ENCODE measurements at regions of chr2 and their contacts with region 1.

Region 1: GRCh38 chr2:39696838-39697237 is 31.1 kb downstream of the TMEM178A start:
- DNase-seq: peak; percentile 11 to 17
- ATAC-seq: peak; percentile 69 to 83
- H3K4me3 ChIP-seq: no peak overlapping the region
- H3K27ac ChIP-seq: no peak overlapping the region
- H3K4me1 ChIP-seq: no peaks in the 10 kb centered on the region
- CTCF ChIP-seq: peak; percentile 63
- EP300 ChIP-seq: no peak
- POLR2A ChIP-seq: no peak
- RAD21 ChIP-seq: peak; percentile 63 to 78

Region 2: GRCh38 chr2:38665854-38666555 is 1030.8 kb before region 1 on chr2 and contains the start of gene GALM:
- CTCF ChIA-PET with region 1: no interaction called
- POLR2A ChIA-PET with region 1: no interaction called
- DNase-seq: peak; percentile 86 to 91
- ATAC-seq: peak; percentile 91 to 96
- H3K4me3 ChIP-seq: peak within 1 kb of the TSS; percentile 54
- H3K27ac ChIP-seq: peak within 1 kb of the TSS; percentile 71 to 89
- H3K4me1 ChIP-seq: peaks cover 13% of the 10 kb centered on the region
- CTCF ChIP-seq: no peak
- EP300 ChIP-seq: no peak
- POLR2A ChIP-seq: peak; percentile 61
- RAD21 ChIP-seq: no peak; a peak in 1 of 5 replicates
- polyA plus RNA-seq, gene GALM: 34.1 and 34.2 TPM in 2 replicates

Region 3: GRCh38 chr2:39379643-39380524 is 317.0 kb before region 1 on chr2:
- CTCF ChIA-PET with region 1: interaction called, 28 read pairs
- POLR2A ChIA-PET with region 1: no interaction called
- DNase-seq: peak; percentile 26 to 71
- ATAC-seq: peak; percentile 88 to 91; a peak in 5 of 6 replicates
- H3K4me3 ChIP-seq: no peak overlapping the region
- H3K27ac ChIP-seq: peak overlapping the region in 1 of 2 experiments; percentile 42; a peak in 1 of 6 replicates
- H3K4me1 ChIP-seq: peaks cover 27% of the 10 kb centered on the region
- CTCF ChIP-seq: peak; percentile 96
- EP300 ChIP-seq: no peak
- POLR2A ChIP-seq: no peak
- RAD21 ChIP-seq: peak; percentile 86 to 93

Region 4: GRCh38 chr2:39513641-39514094 is 183.2 kb before region 1 on chr2:
- CTCF ChIA-PET with region 1: interaction called, 24 read pairs
- POLR2A ChIA-PET with region 1: no interaction called
- DNase-seq: peak; percentile 74 to 76
- ATAC-seq: peak; percentile 82 to 92
- H3K4me3 ChIP-seq: no peak overlapping the region
- H3K27ac ChIP-seq: peak overlapping the region; percentile 40 to 55; a peak in 5 of 6 replicates
- H3K4me1 ChIP-seq: peaks cover 44% of the 10 kb centered on the region
- CTCF ChIP-seq: peak; percentile 64
- EP300 ChIP-seq: no peak
- POLR2A ChIP-seq: no peak
- RAD21 ChIP-seq: peak; percentile 76 to 79

Region 5: DNA sequence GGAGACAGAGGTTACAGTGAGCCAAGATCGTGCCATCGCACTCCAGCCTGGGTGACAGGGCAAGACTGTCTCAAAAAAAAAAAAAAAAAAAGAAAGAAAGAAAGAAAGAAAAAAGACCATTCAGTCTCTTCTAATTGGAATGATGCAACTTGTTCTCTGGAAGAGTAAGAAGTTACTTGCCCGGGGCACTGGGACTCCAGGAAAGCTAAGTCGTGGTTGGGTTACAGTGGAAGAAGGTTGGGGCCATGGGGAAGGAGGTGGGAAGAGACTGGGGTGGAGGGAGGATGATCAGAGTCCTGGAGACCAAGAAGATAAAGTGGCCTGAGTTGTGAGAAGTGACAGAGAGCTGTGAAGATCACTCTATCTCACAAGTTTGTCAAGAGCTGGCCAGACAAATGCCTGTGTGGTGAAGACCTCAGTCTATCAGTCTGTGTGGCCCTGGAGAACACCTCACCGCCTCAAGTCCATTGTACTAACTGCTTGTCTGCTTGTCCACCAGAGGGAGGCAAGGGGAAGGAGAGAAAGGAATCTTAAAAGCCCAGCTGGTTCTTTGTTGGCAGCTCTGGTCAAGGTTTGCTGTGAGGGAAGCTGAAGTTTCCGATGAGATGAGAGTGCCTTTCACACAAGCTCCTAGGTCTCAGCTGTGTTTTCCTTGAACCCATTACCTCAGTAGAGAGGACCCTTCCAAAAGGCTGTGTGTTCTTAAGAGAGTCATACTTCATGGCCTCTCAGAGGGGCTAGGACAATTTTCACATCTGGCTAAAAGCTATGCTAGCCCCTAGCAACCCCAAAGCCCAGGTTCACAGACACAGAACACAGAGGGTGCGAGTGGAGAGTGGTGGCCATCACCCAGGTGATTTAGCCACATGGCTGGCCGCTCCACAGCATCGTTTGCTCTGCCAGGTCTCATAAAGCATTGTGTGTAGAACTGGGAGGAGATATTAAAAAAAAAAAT is 103.1 kb before region 1 on chr2:
- CTCF ChIA-PET with region 1: interaction called, 21 read pairs
- POLR2A ChIA-PET with region 1: no interaction called
- DNase-seq: peak; percentile 39 to 79
- ATAC-seq: peak; percentile 95 to 98
- H3K4me3 ChIP-seq: no peak overlapping the region
- H3K27ac ChIP-seq: peak overlapping the region in 1 of 2 experiments; percentile 2; a peak in 1 of 6 replicates
- H3K4me1 ChIP-seq: no peaks in the 10 kb centered on the region
- CTCF ChIP-seq: peak; percentile 44; the same call in 2 of the 3 replicates
- EP300 ChIP-seq: no peak
- POLR2A ChIP-seq: no peak
- RAD21 ChIP-seq: peak; percentile 54 to 66; a peak in 4 of 5 replicates

Region 6: DNA sequence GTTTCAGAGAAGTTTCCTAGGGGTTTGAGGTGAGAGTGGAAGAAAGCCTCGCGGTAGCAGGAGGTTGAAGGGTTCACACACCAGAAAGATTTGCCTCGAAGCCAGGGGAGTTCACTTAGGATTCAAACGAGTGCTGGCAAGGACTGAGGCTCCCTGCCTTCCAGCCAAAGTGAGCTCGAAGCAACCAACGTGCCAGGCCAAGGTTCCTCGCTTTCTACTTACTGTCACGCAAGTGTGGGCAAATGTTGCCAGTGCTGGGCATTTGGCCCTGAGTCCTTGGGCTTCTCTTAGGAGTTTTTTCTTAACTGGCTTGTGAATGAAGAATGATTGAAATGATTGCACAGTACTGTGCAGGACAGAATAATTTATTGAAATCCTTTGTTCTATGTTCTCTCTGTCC is 22.5 kb after region 1 on chr2:
- CTCF ChIA-PET with region 1: interaction called, 14 read pairs
- POLR2A ChIA-PET with region 1: no interaction called
- DNase-seq: no peak
- ATAC-seq: no peak
- H3K4me3 ChIP-seq: no peak overlapping the region
- H3K27ac ChIP-seq: no peak overlapping the region
- H3K4me1 ChIP-seq: no peaks in the 10 kb centered on the region
- CTCF ChIP-seq: no peak
- EP300 ChIP-seq: no peak
- POLR2A ChIP-seq: no peak
- RAD21 ChIP-seq: no peak